Cardiac septum (tissue), 1 donor: ENCODE measurements at regions of chr10 and their contacts with region 1.

Region 1: GRCh38 chr10:125084191-125084613 is 76.2 kb downstream of the CTBP2 start:
- DNase-seq: no peak

Region 2: GRCh38 chr10:124588736-124589490 is 495.3 kb before region 1 on chr10:
- intact Hi-C with region 1: no loop called
- DNase-seq: no peak

Region 3: GRCh38 chr10:125123476-125124114 is 39.4 kb after region 1 on chr10:
- intact Hi-C with region 1: loop called (anchors 5 kb)
- DNase-seq: peak; percentile 84

Region 4: DNA sequence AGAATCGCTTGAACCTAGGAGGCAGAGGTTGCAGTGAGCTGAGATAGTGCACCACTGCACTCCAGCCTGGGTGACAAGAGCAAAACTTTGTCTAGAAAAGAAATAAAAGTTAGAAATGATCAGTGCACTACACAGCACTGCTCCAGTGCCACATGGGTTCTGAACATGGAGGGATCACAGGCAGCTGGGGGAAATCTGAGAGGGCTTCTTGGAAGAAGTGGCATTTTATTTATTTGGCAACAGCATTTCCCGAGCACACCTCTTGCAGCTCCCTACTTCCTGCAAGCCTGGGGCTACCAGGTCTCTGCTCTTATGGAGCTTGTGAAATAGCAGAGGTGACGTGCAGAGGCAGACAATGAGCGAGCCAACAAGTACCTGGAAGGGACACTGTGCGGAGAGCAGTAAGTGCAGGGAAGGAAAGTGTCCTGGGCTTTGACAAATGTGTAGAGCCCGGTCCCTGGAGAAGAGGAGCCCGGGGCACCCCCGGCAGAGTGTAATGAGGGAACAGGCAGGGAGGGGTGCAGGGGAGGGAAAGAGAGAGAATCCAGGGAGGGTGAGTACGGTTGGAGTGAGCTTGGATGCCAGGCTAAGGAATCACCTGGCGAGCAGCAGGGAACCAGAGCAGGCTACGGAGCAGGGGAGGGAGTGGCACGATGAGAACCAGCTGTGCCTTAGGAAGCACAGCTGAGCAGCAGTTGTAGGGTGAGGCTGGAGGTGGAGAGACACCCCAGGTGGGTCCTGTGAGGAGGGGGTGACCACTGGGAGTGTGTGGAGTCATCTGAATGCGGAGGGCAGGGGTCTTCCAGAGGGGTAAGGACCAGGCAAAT is 180.8 kb after region 1 on chr10:
- intact Hi-C with region 1: no loop called
- DNase-seq: no peak